Heart right ventricle (tissue), 16 donors: ENCODE measurements at regions of chr5 and their contacts with region 1.

Region 1: GRCh38 chr5:59275510-59276324 is 617.8 kb downstream of the PDE4D start:
- DNase-seq: peak; percentile 15 to 57
- ATAC-seq: peak; percentile 78 to 95 (median 90)
- H3K4me3 ChIP-seq: peak overlapping the region; percentile 21 to 61 (median 50)
- H3K27ac ChIP-seq: peak overlapping the region in 9 of 10 donors; percentile 31 to 93 (median 78)
- H3K4me1 ChIP-seq: peaks cover 0 to 45% (median 16%) of the 10 kb centered on the region in 9 donors
- H3K27me3 ChIP-seq: no peaks in the 10 kb centered on the region
- CTCF ChIP-seq: no peak

Region 2: GRCh38 chr5:58675341-58675740 is 600.4 kb before region 1 on chr5:
- intact Hi-C with region 1: no loop called
- DNase-seq: no peak
- ATAC-seq: peak in 1 of 8 donors; percentile 48
- H3K4me3 ChIP-seq: no peak overlapping the region
- H3K27ac ChIP-seq: no peak overlapping the region
- H3K4me1 ChIP-seq: peaks cover 0 to 15% (median 9%) of the 10 kb centered on the region in 9 donors
- H3K27me3 ChIP-seq: no peaks in the 10 kb centered on the region
- CTCF ChIP-seq: no peak

Region 3: DNA sequence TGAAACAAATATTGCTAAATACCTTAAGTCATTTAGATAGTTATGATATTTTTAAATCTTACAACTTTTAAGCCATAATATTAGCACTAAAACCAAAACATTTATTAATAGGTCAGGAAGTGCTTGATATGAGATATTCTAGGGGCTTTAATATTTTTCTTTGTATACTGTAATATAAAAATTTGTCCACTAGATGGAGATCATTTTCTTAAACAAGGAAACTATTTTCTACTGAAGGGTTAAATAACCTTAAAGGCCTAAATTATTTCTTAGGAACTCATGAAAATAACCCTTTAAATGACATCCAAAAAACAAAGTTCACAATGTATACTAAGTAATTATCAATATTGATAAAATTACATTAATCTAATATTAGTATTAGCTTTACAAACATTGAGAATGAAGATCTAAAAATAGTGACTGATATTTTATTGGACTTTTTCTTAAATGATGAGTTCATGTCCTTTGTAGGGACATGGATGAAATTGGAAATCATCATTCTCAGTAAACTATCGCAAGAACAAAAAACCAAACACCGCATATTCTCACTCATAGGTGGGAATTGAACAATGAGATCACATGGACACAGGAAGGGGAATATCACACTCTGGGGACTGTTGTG is 57.2 kb before region 1 on chr5:
- intact Hi-C with region 1: loop called in 3 of 10 experiments (anchors 5 kb)
- DNase-seq: no peak
- ATAC-seq: no peak
- H3K4me3 ChIP-seq: no peak overlapping the region
- H3K27ac ChIP-seq: no peak overlapping the region
- H3K4me1 ChIP-seq: peaks cover 0 to 40% (median 9%) of the 10 kb centered on the region in 9 donors
- H3K27me3 ChIP-seq: no peaks in the 10 kb centered on the region
- CTCF ChIP-seq: peak in 8 of 9 donors; percentile 45 to 65 (median 53)

Region 4: DNA sequence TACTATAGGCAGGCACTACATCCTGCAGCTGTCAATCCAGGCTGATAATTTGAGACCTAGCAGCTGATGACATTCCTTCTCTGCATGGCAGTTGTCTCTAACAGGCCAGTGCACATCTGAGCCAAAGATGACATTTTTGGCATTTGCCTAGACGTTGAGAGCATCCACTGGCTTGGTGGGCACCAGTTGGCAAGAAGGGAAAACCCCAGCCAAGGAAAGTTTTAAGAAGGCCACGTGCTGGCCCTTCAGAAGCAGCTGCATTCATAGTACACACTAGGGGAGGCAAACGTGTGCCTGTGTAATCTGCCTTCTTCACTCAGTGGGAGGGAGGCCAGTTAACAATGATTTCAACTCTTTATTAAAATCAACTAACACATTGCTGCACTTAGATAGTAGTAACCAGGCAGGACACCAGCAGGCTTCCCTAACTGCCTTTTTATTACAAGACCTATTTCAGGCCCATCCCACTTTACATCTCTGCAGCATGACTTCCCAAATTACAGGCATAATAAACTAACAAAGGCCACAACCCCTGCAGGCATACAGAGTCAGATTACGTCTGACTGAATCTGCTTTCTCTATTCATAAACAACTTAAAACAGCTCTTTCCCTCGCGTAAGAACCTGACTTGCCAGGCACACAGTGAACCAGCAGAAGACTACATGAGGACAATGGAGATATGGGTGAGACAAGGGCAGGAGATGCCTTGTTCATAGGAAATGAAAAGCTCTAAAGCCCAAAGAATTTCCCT is 41.5 kb after region 1 on chr5:
- intact Hi-C with region 1: loop called in 1 of 10 experiments (anchors 5 kb)
- DNase-seq: peak in 1 of 2 donors; percentile 29
- ATAC-seq: peak; percentile 44 to 89 (median 64)
- H3K4me3 ChIP-seq: peak overlapping the region in 3 of 10 donors; percentile 2 to 13 (median 3)
- H3K27ac ChIP-seq: peak overlapping the region; percentile 38 to 84 (median 72)
- H3K4me1 ChIP-seq: peaks cover 21 to 83% (median 52%) of the 10 kb centered on the region in 9 donors
- H3K27me3 ChIP-seq: no peaks in the 10 kb centered on the region
- CTCF ChIP-seq: no peak

Region 5: DNA sequence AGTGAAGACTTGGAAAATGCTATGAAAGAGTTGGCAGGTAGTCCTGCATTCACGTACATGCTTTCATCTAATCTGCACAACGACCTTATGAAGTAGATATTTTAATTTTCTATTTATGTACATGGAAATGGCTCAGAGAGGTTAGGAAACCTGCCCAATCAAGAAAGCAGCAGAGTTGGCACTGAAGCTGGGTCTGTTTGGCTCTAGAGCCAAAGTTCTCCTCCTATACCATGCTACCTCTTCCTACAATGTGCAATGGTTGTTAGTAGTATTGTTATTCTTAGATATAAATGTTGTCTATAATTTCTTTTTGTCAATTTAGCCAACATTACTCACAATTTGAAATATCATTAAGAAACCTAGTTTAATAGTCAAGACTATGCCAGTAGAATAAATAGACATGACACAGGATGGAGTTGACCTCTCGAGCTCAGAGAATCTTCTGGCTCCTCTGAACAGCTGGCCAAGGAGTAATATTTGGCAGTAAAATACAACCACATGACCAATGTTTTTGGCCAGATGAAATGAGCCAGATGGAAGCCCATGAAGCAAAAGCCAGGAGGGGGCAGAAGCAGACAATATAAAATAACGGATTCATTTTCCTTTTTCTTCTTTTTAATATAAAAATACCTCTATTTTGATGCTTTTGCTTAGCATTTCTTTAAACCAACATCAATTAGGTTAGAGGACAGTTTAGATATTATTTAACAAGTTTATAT is 75.5 kb after region 1 on chr5:
- intact Hi-C with region 1: loop called in 1 of 10 experiments (anchors 10 kb)
- DNase-seq: peak in 1 of 2 donors; percentile 48
- ATAC-seq: peak; percentile 84 to 96 (median 95)
- H3K4me3 ChIP-seq: peak overlapping the region in 1 of 10 donors; percentile 15
- H3K27ac ChIP-seq: peak overlapping the region in 5 of 10 donors; percentile 35 to 64 (median 57)
- H3K4me1 ChIP-seq: peaks cover 0 to 35% (median 23%) of the 10 kb centered on the region in 9 donors
- H3K27me3 ChIP-seq: no peaks in the 10 kb centered on the region
- CTCF ChIP-seq: peak in 7 of 9 donors; percentile 5 to 65 (median 45)